ENCODE measurements at regions of chr17 and their contacts with region 1.

Region 1: GRCh38 chr17:50806141-50806643 is 29.2 kb upstream of the WFIKKN2 start:
- DNase-seq: peak; percentile 56
- ATAC-seq: peak; percentile 81
- H3K4me3 Mint-ChIP-seq: no peak overlapping the region
- H3K27ac Mint-ChIP-seq: no peak overlapping the region
- H3K4me1 Mint-ChIP-seq: no peaks in the 10 kb centered on the region
- H3K27me3 Mint-ChIP-seq: no peaks in the 10 kb centered on the region
- CTCF ChIP-seq: peak; percentile 43; the same call in 1 of the 2 replicates

Region 2: DNA sequence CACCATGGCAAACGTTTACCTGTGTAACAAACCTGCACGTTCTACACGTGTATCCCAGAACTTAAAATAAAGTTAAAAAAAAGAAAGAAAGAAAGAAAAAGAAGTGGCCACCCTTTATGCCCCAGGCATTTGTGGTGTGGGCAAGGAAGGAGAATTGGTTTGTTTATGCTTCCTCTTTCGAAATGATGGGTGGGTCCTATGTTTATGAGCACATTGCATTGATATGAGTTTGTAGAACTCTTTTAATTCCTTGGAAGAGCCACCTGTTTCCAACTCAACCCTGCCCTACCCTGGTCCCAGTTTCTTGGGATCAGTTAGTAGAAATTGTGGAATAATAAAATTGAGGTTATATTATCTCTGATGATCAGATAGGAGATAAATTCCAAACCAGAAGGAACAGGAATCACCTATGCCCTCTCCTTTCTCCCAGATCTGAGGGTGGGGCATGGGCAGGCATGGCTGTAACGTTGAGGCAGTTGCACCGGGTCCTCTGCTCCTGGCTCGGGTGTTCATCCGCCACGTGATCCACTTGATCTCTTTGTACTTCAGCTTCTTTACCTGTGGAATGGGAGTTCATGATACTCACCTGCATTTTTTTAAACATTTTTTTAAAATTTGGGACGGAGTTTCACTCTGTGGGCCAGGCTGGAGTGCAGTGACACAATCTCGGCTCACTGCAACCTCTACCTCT is 353.4 kb before region 1 on chr17:
- CTCF ChIA-PET with region 1: no interaction called
- POLR2A ChIA-PET with region 1: no interaction called
- DNase-seq: no peak
- ATAC-seq: no peak
- H3K4me3 Mint-ChIP-seq: no peak overlapping the region
- H3K27ac Mint-ChIP-seq: no peak overlapping the region
- H3K4me1 Mint-ChIP-seq: no peaks in the 10 kb centered on the region
- H3K27me3 Mint-ChIP-seq: no peaks in the 10 kb centered on the region
- CTCF ChIP-seq: no peak

Region 3: GRCh38 chr17:50816771-50817751 is 10.9 kb after region 1 on chr17:
- CTCF ChIA-PET with region 1: interaction called, 29 read pairs
- POLR2A ChIA-PET with region 1: no interaction called
- DNase-seq: peak; percentile 55
- ATAC-seq: peak; percentile 79
- H3K4me3 Mint-ChIP-seq: no peak overlapping the region
- H3K27ac Mint-ChIP-seq: no peak overlapping the region
- H3K4me1 Mint-ChIP-seq: peaks cover 10% of the 10 kb centered on the region
- H3K27me3 Mint-ChIP-seq: no peaks in the 10 kb centered on the region
- CTCF ChIP-seq: peak; percentile 69

Region 4: DNA sequence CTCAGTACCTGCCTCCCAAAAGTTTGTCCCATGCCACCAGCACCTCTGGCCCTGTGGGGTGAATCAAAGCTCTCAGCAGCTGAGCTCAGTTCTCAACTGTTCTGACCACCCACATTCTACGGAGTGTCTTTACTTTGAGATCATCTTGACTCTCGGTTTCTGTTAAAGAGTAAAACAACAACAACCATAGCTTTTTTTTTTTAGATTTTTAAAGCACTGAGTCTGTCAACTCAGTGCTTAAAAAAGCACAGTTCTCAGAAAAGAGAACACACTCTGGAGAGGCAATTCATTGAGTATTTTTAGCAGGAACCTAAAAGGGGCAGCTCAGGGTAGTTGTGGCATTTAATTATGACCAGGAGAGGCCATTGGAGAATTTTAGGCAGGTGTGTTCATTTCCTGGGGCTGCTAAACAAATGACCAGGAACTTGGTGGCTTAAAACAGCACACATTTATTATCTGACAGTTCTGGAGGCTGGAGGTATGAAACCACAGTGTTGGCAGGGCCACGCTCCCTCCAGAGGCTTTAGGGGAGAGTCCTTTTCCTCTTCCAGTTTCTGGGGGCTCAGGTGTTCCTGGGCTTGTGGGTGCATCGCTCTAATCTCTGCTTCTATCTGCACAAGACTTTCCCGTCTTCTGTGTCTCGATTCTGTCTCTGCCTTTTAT is 22.4 kb after region 1 on chr17:
- CTCF ChIA-PET with region 1: interaction called, 13 read pairs
- POLR2A ChIA-PET with region 1: no interaction called
- DNase-seq: no peak
- ATAC-seq: no peak
- H3K4me3 Mint-ChIP-seq: no peak overlapping the region
- H3K27ac Mint-ChIP-seq: peak overlapping the region; percentile 72; the same call in 1 of the 2 replicates
- H3K4me1 Mint-ChIP-seq: peaks cover 39% of the 10 kb centered on the region
- H3K27me3 Mint-ChIP-seq: no peaks in the 10 kb centered on the region
- CTCF ChIP-seq: no peak